ENCODE measurements at regions of chr10 and their contacts with region 1.

Region 1: DNA sequence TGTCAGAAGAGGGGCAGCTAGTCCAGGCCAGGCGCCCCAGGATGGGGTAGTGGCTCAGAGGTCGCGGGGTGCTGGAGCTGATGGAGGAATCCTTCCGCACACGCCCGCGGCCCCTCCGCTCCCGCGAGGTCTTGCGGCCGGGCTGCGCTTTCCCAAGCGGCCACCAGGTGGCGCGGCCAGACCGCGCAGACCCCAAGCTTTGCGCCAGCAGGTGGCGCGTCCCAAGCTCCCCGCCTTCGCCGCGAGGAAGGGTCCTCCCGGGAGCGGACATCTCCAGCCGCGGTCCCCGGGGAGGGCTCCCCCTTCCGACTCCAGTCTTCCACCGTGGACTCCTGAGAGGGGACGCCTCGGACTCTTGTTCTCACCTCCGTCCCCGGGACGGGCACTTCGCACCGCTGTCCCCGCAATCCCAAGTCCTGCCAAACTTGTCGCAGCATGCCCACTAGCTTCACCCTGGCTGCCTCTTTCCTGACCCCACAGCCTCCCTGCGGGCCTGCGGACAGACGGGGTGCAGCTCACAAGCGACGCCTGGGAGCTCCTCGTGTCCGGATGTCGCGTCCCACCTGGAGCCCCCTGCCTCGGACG is 19.4 kb downstream of the KCNK18 start:
- DNase-seq: peak; percentile 72
- ATAC-seq: peak; percentile 90
- H3K4me3 Mint-ChIP-seq: peak overlapping the region; percentile 66
- H3K27ac Mint-ChIP-seq: no peak overlapping the region
- H3K4me1 Mint-ChIP-seq: peaks cover 5% of the 10 kb centered on the region
- H3K27me3 Mint-ChIP-seq: peaks cover 23% of the 10 kb centered on the region
- CTCF ChIP-seq: peak; percentile 96

Region 2: DNA sequence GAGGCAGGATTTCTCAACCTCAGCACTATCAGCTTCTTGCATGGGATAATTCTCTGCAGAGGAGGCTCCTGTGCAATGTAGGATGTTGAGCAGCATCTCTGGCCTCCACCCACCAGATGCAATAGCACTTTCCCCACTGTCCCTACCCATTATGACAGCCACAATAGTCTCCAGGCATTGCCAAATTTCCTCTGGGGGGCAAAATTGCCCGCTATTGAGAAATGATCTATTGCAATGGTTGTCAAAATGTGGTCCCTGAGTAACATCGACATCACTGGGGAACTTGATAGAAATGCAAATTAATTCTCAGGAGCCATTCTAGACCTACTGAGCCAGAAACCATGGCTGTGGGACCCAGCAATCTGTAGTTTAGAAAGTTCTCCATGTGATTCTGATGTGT is 12.4 kb before region 1 on chr10:
- CTCF ChIA-PET with region 1: interaction called, 12 read pairs
- POLR2A ChIA-PET with region 1: no interaction called
- intact Hi-C with region 1: no loop called
- DNase-seq: no peak
- ATAC-seq: no peak
- H3K4me3 Mint-ChIP-seq: no peak overlapping the region
- H3K27ac Mint-ChIP-seq: no peak overlapping the region
- H3K4me1 Mint-ChIP-seq: no peaks in the 10 kb centered on the region
- H3K27me3 Mint-ChIP-seq: peaks cover 7% of the 10 kb centered on the region
- CTCF ChIP-seq: no peak

Region 3: DNA sequence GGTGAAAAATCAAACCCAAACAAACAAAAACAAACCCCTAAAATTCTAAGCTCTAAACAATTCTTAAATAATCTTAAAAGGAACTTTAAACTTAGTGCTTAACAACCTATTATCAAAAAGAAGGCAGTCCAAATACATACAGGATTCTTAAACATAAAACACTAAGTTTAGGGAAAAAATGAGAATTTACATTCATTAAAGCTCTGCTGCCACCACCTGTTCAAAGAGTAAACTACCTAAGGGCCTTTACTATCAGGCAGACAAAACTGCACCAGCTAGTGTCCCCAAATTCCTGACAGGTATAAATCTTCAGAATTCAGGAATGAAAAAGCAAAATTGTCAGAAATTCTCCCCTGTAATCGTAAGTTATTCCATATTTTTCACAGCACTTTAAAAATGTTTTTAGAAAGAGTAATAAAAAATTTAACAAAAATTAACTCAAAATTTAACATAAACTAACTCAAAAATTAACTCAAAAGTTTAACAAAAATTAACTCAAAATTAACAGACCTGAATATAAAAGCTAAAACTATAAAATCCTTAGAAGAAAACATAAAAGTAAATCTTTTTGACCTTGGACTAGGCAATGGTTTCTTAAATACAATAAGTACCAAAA is 103.5 kb after region 1 on chr10:
- CTCF ChIA-PET with region 1: interaction called, 91 read pairs
- POLR2A ChIA-PET with region 1: interaction called, 4 read pairs
- intact Hi-C with region 1: loop called (anchors 1 kb)
- DNase-seq: no peak
- ATAC-seq: no peak
- H3K4me3 Mint-ChIP-seq: no peak overlapping the region
- H3K27ac Mint-ChIP-seq: no peak overlapping the region
- H3K4me1 Mint-ChIP-seq: no peaks in the 10 kb centered on the region
- H3K27me3 Mint-ChIP-seq: no peaks in the 10 kb centered on the region
- CTCF ChIP-seq: no peak